ENCODE measurements at regions of chr2 and their contacts with region 1.

Region 1: DNA sequence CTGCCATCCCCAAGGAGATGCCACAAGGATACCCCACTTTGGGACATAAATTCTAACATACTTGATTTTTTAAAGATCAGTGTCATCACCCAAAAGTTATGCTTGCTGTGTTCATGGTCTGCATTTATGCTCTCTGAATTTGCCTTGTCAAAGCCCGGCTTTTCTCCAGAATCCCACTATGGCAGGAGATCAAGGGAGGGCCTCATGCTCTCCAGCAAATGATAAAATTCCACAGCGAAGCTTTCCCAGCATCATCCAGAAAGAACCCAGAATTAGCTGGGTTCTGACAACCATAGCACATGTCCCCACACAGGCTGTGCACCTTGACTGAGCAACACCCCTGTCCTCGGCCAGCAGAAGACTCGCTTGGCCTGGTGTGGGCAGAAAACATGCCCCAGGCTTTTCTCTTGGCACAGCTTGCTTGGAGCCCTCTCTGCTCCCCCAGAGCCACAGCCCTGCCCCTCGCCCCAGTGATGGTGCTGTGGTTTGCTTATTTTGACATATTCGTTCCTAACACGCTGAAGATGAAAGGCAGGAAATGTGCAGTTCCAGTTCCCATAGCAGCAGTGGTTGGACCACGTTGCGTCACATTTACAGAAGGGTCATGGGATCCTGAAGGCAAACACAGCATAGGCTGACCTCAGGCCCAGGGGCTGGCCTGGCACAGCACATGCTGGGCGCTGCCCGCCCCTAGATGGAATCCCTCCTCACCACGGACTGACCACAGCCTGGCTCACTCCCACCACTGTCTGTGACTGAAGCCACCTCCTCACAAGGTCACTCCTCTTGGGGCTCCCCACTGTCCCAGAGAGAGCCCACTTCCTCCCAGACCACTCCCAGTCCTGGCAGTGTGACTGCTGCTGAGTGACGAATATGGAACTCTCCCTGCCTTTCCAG is 14.1 kb upstream of the CHRNA1 start:
- DNase-seq: peak in 1 of 2 donors; percentile 29
- H3K4me3 ChIP-seq: no peak overlapping the region
- H3K27ac ChIP-seq: no peak overlapping the region
- H3K4me1 ChIP-seq: peaks cover 0 to 7% (median 0%) of the 10 kb centered on the region in 4 donors
- H3K27me3 ChIP-seq: peaks cover 0 to 6% of the 10 kb centered on the region in 2 donors
- CTCF ChIP-seq: no peak

Region 2: GRCh38 chr2:174025271-174026123 is 752.8 kb before region 1 on chr2:
- intact Hi-C with region 1: no loop called
- DNase-seq: peak; percentile 92 to 94
- H3K4me3 ChIP-seq: peak overlapping the region in 1 of 2 donors; percentile 2
- H3K27ac ChIP-seq: peak overlapping the region; percentile 60 to 65
- H3K4me1 ChIP-seq: peaks cover 0 to 34% (median 23%) of the 10 kb centered on the region in 4 donors
- H3K27me3 ChIP-seq: no peaks in the 10 kb centered on the region
- CTCF ChIP-seq: no peak

Region 3: GRCh38 chr2:174977360-174977759 is 199.0 kb after region 1 on chr2:
- intact Hi-C with region 1: loop called (anchors 5 kb)
- DNase-seq: no peak
- H3K4me3 ChIP-seq: no peak overlapping the region
- H3K27ac ChIP-seq: no peak overlapping the region
- H3K4me1 ChIP-seq: peaks cover 0 to 13% (median 0%) of the 10 kb centered on the region in 4 donors
- H3K27me3 ChIP-seq: no peaks in the 10 kb centered on the region
- CTCF ChIP-seq: no peak